Motor neuron (in vitro differentiated cells): ENCODE measurements at regions of chr11 and their contacts with region 1.

Region 1: GRCh38 chr11:84780689-84781293 is 846.4 kb downstream of the DLG2 start:
- ATAC-seq: peak in 5 of 8 experiments; percentile 38 to 69 (median 53)
- H3K4me3 ChIP-seq: no peak overlapping the region
- H3K27ac ChIP-seq: no peak overlapping the region
- H3K4me1 ChIP-seq: no peaks in the 10 kb centered on the region

Region 2: GRCh38 chr11:84993386-84993785 is 212.6 kb after region 1 on chr11:
- in situ Hi-C with region 1: loop called in 1 of 9 experiments (anchors 25 kb)
- ATAC-seq: no peak
- H3K4me3 ChIP-seq: no peak overlapping the region
- H3K27ac ChIP-seq: no peak overlapping the region
- H3K4me1 ChIP-seq: no peaks in the 10 kb centered on the region

Region 3: GRCh38 chr11:85595285-85595884 is 814.6 kb after region 1 on chr11:
- in situ Hi-C with region 1: loop called in 1 of 9 experiments (anchors 25 kb)
- ATAC-seq: peak in 4 of 8 experiments; percentile 32 to 68 (median 56)
- H3K4me3 ChIP-seq: no peak overlapping the region
- H3K27ac ChIP-seq: no peak overlapping the region
- H3K4me1 ChIP-seq: no peaks in the 10 kb centered on the region